ENCODE measurements at regions of chr17 and their contacts with region 1.

Region 1: DNA sequence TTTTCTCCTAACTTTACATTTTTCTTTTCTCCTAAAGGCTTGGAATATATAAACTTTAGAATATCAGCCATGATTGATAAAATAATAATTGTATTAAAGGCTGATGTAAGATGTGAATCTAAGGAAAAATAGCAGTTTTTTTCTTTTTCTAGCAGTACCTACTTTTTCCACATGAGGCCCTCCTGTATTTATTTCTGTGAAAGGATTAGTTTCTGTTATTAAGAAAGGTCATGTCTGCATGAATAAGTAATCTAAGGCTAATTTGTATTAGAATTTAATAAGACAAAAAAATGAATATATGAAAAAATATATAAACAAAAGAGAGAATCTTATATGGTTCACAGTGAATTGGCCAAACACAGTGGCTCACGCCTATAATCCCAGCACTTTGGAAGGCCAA is 85.3 kb downstream of the STXBP4 start:
- DNase-seq: peak; percentile 23
- H3K4me3 ChIP-seq: no peak overlapping the region
- H3K27ac ChIP-seq: no peak overlapping the region
- H3K4me1 ChIP-seq: no peaks in the 10 kb centered on the region
- H3K27me3 ChIP-seq: no peaks in the 10 kb centered on the region
- CTCF ChIP-seq: peak in 1 of 2 donors; percentile 13
- POLR2A ChIP-seq: no peak

Region 2: GRCh38 chr17:54968262-54968987 is 85.4 kb before region 1 on chr17 and contains the starts of genes COX11 and STXBP4:
- CTCF ChIA-PET with region 1: no interaction called
- POLR2A ChIA-PET with region 1: no interaction called
- dilution Hi-C with region 1: no loop called
- intact Hi-C with region 1: no loop called
- DNase-seq: peak; percentile 98
- H3K4me3 ChIP-seq: peak within 1 kb of the TSS; percentile 43 to 94 (median 80)
- H3K27ac ChIP-seq: peak within 1 kb of the TSS; percentile 52
- H3K4me1 ChIP-seq: peaks cover 19% of the 10 kb centered on the region
- H3K27me3 ChIP-seq: no peaks in the 10 kb centered on the region
- CTCF ChIP-seq: peak in 1 of 2 donors; percentile 39
- POLR2A ChIP-seq: peak; percentile 93
- total RNA-seq, gene COX11: 55.6 and 55.9 TPM in 2 replicates
- total RNA-seq, gene STXBP4: 11.3 and 12.9 TPM in 2 replicates

Region 3: GRCh38 chr17:55020277-55020676 is 33.6 kb before region 1 on chr17:
- CTCF ChIA-PET with region 1: no interaction called
- POLR2A ChIA-PET with region 1: no interaction called
- dilution Hi-C with region 1: no loop called
- intact Hi-C with region 1: no loop called
- DNase-seq: no peak
- H3K4me3 ChIP-seq: no peak overlapping the region
- H3K27ac ChIP-seq: no peak overlapping the region
- H3K4me1 ChIP-seq: no peaks in the 10 kb centered on the region
- H3K27me3 ChIP-seq: no peaks in the 10 kb centered on the region
- CTCF ChIP-seq: no peak
- POLR2A ChIP-seq: no peak

Region 4: DNA sequence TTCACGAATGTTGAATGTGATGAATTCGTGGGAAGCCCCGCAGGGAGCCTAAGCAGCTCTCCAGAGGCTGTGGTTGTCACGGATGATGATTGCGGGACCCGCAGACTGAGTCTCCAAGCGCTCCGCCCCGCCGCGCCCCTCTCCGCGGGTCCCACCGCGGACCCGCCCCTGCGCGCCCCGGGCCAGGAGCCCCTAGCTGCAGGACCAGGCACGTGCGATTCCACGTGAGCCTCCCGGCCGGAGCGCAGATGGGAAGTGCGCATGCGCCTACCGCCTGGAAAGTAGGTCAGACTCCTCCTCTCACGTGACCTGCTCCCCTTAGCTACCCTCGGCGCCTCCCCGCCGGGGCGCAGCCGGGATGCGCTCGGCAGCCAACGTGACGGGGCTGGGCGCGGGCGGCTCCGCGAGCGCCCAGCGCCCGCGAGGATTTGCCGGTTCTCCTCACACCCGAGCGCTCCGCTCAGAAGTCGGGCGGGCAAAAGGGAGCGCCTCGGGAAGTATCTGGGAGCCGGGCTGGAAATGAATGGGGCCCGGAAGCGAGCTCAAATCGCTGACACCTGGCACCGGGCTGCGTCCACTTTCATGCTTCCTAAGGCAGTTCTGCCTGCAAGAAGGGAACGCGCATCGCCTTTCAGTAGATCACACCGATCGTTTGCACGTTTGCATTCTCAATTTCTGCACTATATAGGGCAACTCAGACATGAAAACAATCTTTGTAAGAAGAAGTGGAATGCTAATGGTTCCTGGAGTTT is 184.5 kb after region 1 on chr17:
- CTCF ChIA-PET with region 1: no interaction called
- POLR2A ChIA-PET with region 1: no interaction called
- dilution Hi-C with region 1: no loop called
- intact Hi-C with region 1: loop called (anchors 1 kb)
- DNase-seq: peak; percentile 83
- H3K4me3 ChIP-seq: peak overlapping the region; percentile 40 to 57 (median 57)
- H3K27ac ChIP-seq: no peak overlapping the region
- H3K4me1 ChIP-seq: peaks cover 3% of the 10 kb centered on the region
- H3K27me3 ChIP-seq: peaks cover 0 to 11% of the 10 kb centered on the region in 2 experiments
- CTCF ChIP-seq: peak in 1 of 2 donors; percentile 0
- POLR2A ChIP-seq: no peak

Region 5: GRCh38 chr17:55295411-55296170 is 241.7 kb after region 1 on chr17:
- CTCF ChIA-PET with region 1: interaction called, 10 read pairs
- POLR2A ChIA-PET with region 1: no interaction called
- dilution Hi-C with region 1: no loop called
- intact Hi-C with region 1: loop called (anchors 1 kb)
- DNase-seq: peak; percentile 65
- H3K4me3 ChIP-seq: no peak overlapping the region
- H3K27ac ChIP-seq: no peak overlapping the region
- H3K4me1 ChIP-seq: no peaks in the 10 kb centered on the region
- H3K27me3 ChIP-seq: no peaks in the 10 kb centered on the region
- CTCF ChIP-seq: peak; percentile 68 to 82
- POLR2A ChIP-seq: no peak

Region 6: GRCh38 chr17:55348749-55349354 is 295.0 kb after region 1 on chr17:
- CTCF ChIA-PET with region 1: interaction called, 14 read pairs
- POLR2A ChIA-PET with region 1: no interaction called
- dilution Hi-C with region 1: no loop called
- intact Hi-C with region 1: loop called (anchors 2 kb)
- DNase-seq: peak; percentile 56
- H3K4me3 ChIP-seq: no peak overlapping the region
- H3K27ac ChIP-seq: no peak overlapping the region
- H3K4me1 ChIP-seq: no peaks in the 10 kb centered on the region
- H3K27me3 ChIP-seq: peaks cover 6 to 7% of the 10 kb centered on the region in 2 experiments
- CTCF ChIP-seq: peak; percentile 62 to 84
- POLR2A ChIP-seq: no peak